Dorsolateral prefrontal cortex (tissue), 120 donors: ENCODE measurements at regions of chr4 and their contacts with region 1.

Region 1: DNA sequence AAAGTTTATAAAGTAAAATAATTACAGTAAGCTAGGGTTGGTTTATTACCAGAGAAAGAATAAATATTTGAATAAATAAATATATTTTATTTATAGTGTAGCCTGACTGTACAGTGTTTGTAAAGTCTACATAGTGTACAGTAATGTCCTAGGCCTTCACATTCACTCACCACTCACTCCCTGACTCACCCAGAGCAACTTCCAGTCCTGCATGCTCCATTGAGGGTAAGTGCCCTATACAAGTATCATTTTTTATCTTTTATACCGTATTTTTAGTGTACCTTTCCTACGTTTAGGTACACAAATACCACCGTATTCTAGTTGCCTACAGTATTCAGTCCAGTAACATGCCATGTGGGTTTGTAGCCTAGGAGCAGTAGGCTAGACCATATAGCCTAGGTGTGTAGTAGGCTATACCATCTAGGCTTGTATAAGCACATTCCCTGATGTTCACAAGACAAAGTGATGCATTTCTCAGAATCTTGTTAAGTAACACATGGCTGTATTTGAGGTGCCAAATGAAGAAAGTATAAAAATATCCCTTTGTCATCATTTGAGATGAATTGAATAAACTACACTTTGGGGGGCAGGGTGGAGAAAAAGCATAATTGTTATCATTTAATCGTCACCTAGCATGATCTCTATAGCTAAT is 14.7 kb upstream of the KLHL8 start:
- DNase-seq: no peak
- H3K4me3 ChIP-seq: peak overlapping the region; percentile 28 to 73 (median 56)
- H3K27ac ChIP-seq: peak overlapping the region in 22 of 59 donors; percentile 3 to 70 (median 40)
- H3K27me3 ChIP-seq: no peaks in the 10 kb centered on the region
- CTCF ChIP-seq: no peak

Region 2: GRCh38 chr4:86927843-86928395 is 307.2 kb before region 1 on chr4:
- intact Hi-C with region 1: loop called in 1 of 2 experiments (anchors 10 kb)
- DNase-seq: no peak
- H3K4me3 ChIP-seq: no peak overlapping the region
- H3K27ac ChIP-seq: no peak overlapping the region
- H3K27me3 ChIP-seq: no peaks in the 10 kb centered on the region
- CTCF ChIP-seq: no peak

Region 3: GRCh38 chr4:87130985-87131703 is 104.0 kb before region 1 on chr4:
- intact Hi-C with region 1: no loop called
- DNase-seq: no peak
- H3K4me3 ChIP-seq: no peak overlapping the region
- H3K27ac ChIP-seq: peak overlapping the region in 1 of 59 donors; percentile 30
- H3K27me3 ChIP-seq: no peaks in the 10 kb centered on the region
- CTCF ChIP-seq: no peak

Region 4: DNA sequence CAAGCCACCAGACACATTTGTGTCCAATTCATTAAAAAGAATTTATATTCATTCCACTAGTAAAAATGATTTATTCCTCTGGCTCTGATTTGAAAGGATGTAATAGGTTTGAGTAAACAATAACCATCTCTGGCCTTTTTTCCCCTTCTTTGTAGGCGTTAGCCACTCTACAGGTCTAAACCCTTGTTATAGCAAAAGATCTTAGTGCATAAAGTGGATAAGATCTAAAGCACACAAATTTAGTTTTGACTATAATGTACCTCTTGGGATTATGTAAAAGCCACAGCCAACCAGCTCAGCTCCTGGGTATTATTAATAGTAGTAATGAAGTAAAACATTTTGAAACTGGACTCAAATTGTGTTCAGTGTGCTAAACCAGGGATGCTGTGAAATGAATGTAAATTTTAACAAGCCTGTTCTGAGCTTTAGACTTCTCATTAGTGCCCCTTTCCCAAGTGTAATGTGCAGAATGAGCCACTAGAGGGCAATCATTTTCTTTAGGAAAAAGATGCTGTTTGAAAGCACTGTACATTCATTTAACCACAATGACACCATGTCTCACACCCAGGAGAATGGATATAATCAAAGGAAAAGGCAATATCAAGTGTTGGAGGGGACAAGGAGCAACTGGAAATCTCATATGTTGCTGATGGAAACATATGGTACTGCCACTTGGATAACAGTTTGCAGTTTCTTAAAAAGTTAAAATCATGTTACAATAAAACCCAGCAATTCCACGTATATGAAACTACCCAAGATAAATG is 84.5 kb before region 1 on chr4:
- intact Hi-C with region 1: loop called (anchors 2 kb)
- DNase-seq: peak in 2 of 10 donors; percentile 35 to 48
- H3K4me3 ChIP-seq: no peak overlapping the region
- H3K27ac ChIP-seq: no peak overlapping the region
- H3K27me3 ChIP-seq: no peaks in the 10 kb centered on the region
- CTCF ChIP-seq: peak; percentile 86 to 99 (median 94)

Region 5: GRCh38 chr4:87807402-87807801 is 572.3 kb after region 1 on chr4:
- intact Hi-C with region 1: no loop called
- DNase-seq: no peak
- H3K4me3 ChIP-seq: no peak overlapping the region
- H3K27ac ChIP-seq: no peak overlapping the region
- H3K27me3 ChIP-seq: no peaks in the 10 kb centered on the region
- CTCF ChIP-seq: no peak